Heart left ventricle (tissue), 16 donors: ENCODE measurements at regions of chr5 and their contacts with region 1.

Region 1: DNA sequence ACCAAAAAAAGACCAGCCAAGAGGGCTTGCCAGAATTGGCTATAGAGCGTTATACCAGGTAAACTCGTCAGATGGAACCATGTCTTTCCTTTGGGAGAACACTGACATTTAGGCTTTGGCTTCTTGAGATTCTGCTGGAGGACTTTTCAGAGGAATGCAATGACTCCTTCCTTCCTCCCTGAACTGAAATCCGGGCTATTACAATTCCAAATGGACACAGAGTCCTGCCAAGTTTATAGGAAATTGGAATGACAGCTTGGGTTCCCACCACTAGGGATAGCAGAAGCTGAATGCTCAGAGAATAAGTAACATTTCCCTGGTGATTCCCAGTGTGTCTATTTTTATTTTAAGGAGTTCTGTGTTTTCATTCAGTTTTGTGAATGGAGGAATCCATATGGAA is 143.0 kb downstream of the FGF1 start:
- DNase-seq: peak in 2 of 5 donors; percentile 31 to 49
- ATAC-seq: peak; percentile 53 to 86 (median 83)
- H3K4me3 ChIP-seq: no peak overlapping the region
- H3K27ac ChIP-seq: peak overlapping the region; percentile 63 to 89 (median 80)
- H3K4me1 ChIP-seq: peaks cover 0 to 57% (median 34%) of the 10 kb centered on the region in 12 donors
- H3K27me3 ChIP-seq: no peaks in the 10 kb centered on the region
- CTCF ChIP-seq: peak in 7 of 12 donors; percentile 16 to 53 (median 38)
- POLR2A ChIP-seq: no peak

Region 2: GRCh38 chr5:142280066-142280911 is 262.6 kb before region 1 on chr5:
- intact Hi-C with region 1: loop called in 1 of 10 experiments (anchors 5 kb)
- DNase-seq: peak; percentile 78 to 88 (median 87)
- ATAC-seq: peak; percentile 81 to 93 (median 92)
- H3K4me3 ChIP-seq: no peak overlapping the region
- H3K27ac ChIP-seq: peak overlapping the region; percentile 37 to 87 (median 74)
- H3K4me1 ChIP-seq: peaks cover 8 to 44% (median 23%) of the 10 kb centered on the region in 12 donors
- H3K27me3 ChIP-seq: peaks cover 0 to 3% (median 0%) of the 10 kb centered on the region in 9 donors
- CTCF ChIP-seq: no peak
- POLR2A ChIP-seq: no peak

Region 3: GRCh38 chr5:142356716-142357473 is 186.0 kb before region 1 on chr5:
- intact Hi-C with region 1: loop called in 8 of 10 experiments (anchors 2 to 10 kb)
- DNase-seq: peak; percentile 89 to 93 (median 91)
- ATAC-seq: peak; percentile 74 to 93 (median 92)
- H3K4me3 ChIP-seq: peak overlapping the region; percentile 52 to 73 (median 64)
- H3K27ac ChIP-seq: peak overlapping the region; percentile 85 to 97 (median 94)
- H3K4me1 ChIP-seq: peaks cover 0 to 22% (median 12%) of the 10 kb centered on the region in 12 donors
- H3K27me3 ChIP-seq: peaks cover 0 to 33% (median 0%) of the 10 kb centered on the region in 9 donors
- CTCF ChIP-seq: peak in 1 of 12 donors; percentile 16
- POLR2A ChIP-seq: peak; percentile 7 to 62

Region 4: DNA sequence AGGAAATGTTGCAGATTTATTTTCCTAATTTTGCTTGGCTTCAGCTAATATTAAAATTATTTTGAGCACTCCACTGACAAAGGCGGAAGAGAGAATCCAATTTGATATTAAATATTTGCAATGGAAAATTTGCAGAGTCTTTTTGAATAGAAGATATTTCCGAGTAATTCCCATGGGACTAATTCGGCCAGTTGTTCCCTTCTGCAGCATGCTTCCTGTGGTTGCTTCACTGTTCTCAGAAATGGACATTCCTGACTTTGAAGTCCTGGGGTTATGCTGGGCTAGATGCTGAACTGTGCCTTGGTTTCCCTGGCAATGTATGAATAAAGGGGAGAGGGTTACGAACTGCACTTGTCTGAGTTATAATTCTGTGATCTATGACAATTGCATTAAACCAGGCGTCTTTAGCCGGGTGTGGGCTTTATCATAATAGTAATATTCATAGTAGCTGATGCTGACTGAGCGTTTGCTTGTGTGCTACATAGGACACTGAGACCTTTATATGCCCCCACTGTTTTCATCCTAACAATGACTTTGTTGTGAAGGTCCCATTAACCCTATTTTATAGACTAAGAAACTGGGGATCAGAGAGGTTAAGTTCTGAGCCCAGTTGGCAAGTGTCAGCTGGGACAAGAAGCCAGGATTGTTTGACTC is 103.6 kb before region 1 on chr5:
- intact Hi-C with region 1: loop called in 5 of 10 experiments (anchors 5 to 10 kb)
- DNase-seq: peak in 1 of 5 donors; percentile 50
- ATAC-seq: peak in 3 of 4 donors; percentile 45 to 84 (median 78)
- H3K4me3 ChIP-seq: peak overlapping the region in 2 of 12 donors; percentile 1 to 17
- H3K27ac ChIP-seq: peak overlapping the region in 9 of 12 donors; percentile 23 to 79 (median 67)
- H3K4me1 ChIP-seq: peaks cover 0 to 51% (median 26%) of the 10 kb centered on the region in 12 donors
- H3K27me3 ChIP-seq: no peaks in the 10 kb centered on the region
- CTCF ChIP-seq: no peak
- POLR2A ChIP-seq: no peak

Region 5: GRCh38 chr5:142492781-142493281 is 50.1 kb before region 1 on chr5:
- intact Hi-C with region 1: loop called in 2 of 10 experiments (anchors 5 kb)
- DNase-seq: no peak
- ATAC-seq: peak; percentile 35 to 62 (median 49)
- H3K4me3 ChIP-seq: no peak overlapping the region
- H3K27ac ChIP-seq: peak overlapping the region; percentile 27 to 72 (median 58)
- H3K4me1 ChIP-seq: peaks cover 0 to 50% (median 20%) of the 10 kb centered on the region in 12 donors
- H3K27me3 ChIP-seq: no peaks in the 10 kb centered on the region
- CTCF ChIP-seq: no peak
- POLR2A ChIP-seq: no peak

Region 6: GRCh38 chr5:143386725-143387124 is 843.8 kb after region 1 on chr5:
- intact Hi-C with region 1: no loop called
- DNase-seq: no peak
- ATAC-seq: no peak
- H3K4me3 ChIP-seq: no peak overlapping the region
- H3K27ac ChIP-seq: no peak overlapping the region
- H3K4me1 ChIP-seq: peaks cover 0 to 57% (median 42%) of the 10 kb centered on the region in 12 donors
- H3K27me3 ChIP-seq: no peaks in the 10 kb centered on the region
- CTCF ChIP-seq: no peak
- POLR2A ChIP-seq: no peak